Activated T-helper 1 cell treated with anti-CD3 and anti-CD28 coated beads, Interleukin-12 subunit alpha, Interleukin-12 subunit beta, Interleukin-2, Interleukin-4 antibody, amounts not matched to agents 30 ng/mL and 10 ng/mL and 1 ng/mL, durations not matched to agents 14 hours and 24 hours and 36 hours (primary cell): ENCODE measurements at regions of chr11 and their contacts with region 1.

Region 1: DNA sequence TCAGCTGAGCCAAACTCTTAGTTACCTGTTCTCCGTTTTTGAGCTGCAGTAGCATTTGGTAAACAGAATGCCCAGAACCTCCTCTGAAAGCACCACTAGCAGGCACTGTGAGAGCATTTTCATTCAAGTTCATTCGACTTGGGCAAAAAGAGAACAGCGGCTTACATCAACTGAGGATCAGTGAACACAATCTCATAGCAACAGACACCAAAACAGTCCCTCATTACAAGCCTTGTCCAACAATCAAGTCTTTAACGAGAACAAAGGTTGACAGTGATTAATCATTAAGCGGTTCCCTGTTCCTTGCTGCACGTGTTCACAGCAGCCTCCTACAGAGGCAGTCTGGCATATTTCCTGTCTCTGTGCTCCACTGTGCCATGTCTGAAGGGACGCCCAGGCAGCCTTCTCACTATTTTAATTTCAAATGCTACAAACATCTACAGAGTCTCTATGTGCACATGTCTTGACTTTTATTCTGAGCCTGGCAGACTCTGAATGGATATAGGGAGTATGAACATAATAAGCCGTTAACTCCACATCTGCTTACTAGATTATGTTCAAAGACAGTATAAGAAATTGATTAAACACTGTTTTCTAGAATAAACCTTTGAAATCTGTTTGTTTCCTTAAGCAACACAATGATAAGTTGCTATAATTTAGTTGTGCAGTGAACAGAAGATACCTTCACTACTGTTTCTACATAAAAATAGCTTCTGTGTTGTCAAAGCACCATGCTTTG is 88.3 kb upstream of the MTMR2 start:
- DNase-seq: peak; percentile 20
- H3K4me3 Mint-ChIP-seq: no peak overlapping the region
- H3K27ac Mint-ChIP-seq: peak overlapping the region; percentile 75
- H3K4me1 Mint-ChIP-seq: peaks cover 49% of the 10 kb centered on the region
- H3K27me3 Mint-ChIP-seq: no peaks in the 10 kb centered on the region

Region 2: DNA sequence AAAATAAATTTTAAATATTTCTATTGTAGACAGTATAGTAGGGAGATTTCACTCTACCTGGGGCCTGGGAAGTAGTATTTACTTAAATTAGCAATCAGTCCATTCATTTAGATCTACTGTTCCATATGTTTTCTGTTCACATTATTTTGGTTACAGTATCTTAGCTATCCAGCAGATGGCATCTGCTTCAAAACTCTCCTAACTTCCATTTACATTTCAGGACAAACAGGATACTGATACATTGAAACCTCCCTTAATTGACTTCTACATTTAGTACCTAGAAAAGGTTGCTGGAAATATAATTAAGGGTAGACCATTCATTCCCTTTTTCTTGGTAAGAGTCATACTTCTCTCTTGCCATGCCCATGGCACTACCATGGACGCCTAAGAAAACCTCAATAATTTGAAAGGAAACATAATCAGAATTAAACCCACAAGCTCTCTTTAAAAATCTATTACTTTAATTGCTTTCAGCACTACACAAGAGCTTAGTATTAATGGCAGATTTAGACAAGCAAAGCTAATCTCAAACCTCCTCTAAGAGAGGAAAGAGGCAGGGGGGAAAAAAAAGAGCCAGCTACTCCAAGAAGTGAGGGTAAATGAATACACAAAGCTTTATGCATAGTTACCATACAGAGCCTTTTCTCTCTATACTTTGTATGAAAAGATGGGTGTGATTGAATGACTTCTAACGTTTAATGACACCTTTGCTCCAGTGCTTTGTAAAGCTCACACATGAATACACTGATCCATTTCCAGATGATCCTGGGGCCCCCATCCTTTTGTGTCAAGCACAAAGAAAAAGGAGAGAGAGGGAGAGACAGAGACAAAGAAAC is 42.8 kb after region 1 on chr11:
- intact Hi-C with region 1: loop called (anchors 1 kb)
- DNase-seq: no peak
- H3K4me3 Mint-ChIP-seq: no peak overlapping the region
- H3K27ac Mint-ChIP-seq: no peak overlapping the region
- H3K4me1 Mint-ChIP-seq: peaks cover 60% of the 10 kb centered on the region
- H3K27me3 Mint-ChIP-seq: no peaks in the 10 kb centered on the region

Region 3: DNA sequence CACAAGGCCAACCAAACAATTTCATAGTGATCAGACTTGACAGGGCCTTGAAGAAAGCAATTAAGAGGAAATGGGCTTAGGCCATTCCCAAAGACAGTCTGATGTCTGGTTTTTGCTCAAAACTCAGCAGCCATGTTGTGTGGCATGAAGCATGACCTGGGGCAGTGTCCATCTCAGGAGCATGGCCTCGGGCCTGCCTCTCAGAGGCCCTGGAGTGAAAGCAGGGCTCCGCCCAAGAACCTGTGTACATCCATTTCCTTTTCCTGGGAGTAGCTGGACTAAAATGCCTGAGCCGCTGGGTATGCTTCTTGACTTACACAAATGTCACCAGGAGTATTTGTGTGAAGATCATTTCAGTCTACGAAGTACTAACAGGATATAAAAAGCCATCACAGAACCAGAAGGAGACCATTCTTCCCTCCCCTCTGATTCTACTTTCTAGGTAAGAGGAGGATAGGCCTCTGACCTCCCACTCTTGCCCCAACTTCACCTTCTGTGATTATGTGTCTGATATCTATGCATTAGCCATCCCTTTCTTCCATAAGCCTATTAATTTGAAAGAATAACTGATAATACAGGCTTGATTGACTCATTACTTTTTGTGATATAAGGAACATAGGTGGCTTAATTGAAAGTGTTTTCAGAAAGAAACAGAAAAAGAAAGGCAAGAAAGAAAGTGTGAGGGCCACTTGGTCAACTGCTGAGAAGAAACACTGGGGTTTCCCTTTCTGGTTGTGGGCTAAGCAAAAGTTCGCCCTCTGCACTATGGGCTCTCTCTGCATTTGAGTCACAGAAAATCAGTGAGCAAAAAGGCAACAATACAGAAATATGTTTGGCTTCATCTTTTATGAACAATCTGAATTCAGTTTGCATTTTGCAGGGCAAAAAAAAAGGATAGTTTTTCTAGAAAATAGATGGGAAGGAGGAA is 100.2 kb after region 1 on chr11:
- intact Hi-C with region 1: loop called (anchors 5 kb)
- DNase-seq: no peak
- H3K4me3 Mint-ChIP-seq: peak overlapping the region; percentile 50
- H3K27ac Mint-ChIP-seq: peak overlapping the region; percentile 84
- H3K4me1 Mint-ChIP-seq: peaks cover 32% of the 10 kb centered on the region
- H3K27me3 Mint-ChIP-seq: no peaks in the 10 kb centered on the region

Region 4: GRCh38 chr11:96235751-96236150 is 223.5 kb after region 1 on chr11:
- intact Hi-C with region 1: loop called (anchors 2 kb)
- DNase-seq: peak; percentile 56
- H3K4me3 Mint-ChIP-seq: peak overlapping the region; percentile 74
- H3K27ac Mint-ChIP-seq: peak overlapping the region; percentile 93
- H3K4me1 Mint-ChIP-seq: peaks cover 13% of the 10 kb centered on the region
- H3K27me3 Mint-ChIP-seq: no peaks in the 10 kb centered on the region

Region 5: GRCh38 chr11:96389720-96390487 is 377.6 kb after region 1 on chr11 and contains the starts of genes CCDC82 and JRKL:
- intact Hi-C with region 1: loop called (anchors 2 kb)
- DNase-seq: peak; percentile 97
- H3K4me3 Mint-ChIP-seq: peak within 1 kb of the TSS; percentile 95
- H3K27ac Mint-ChIP-seq: peak within 1 kb of the TSS; percentile 85
- H3K4me1 Mint-ChIP-seq: peaks cover 64% of the 10 kb centered on the region
- H3K27me3 Mint-ChIP-seq: no peaks in the 10 kb centered on the region
- total RNA-seq, gene CCDC82: 28.5 and 29.9 TPM in 2 replicates
- total RNA-seq, gene JRKL: 9.6 and 10.2 TPM in 2 replicates